ENCODE measurements at regions of chr9 and their contacts with region 1.

Region 1: GRCh38 chr9:36258208-36258988 is at the start of gene GNE:
- DNase-seq: peak; percentile 95 to 99 (median 98)
- ATAC-seq: peak; percentile 89
- H3K4me3 ChIP-seq: peak within 1 kb of the TSS; percentile 85 to 100
- H3K4me3 Mint-ChIP-seq: peak within 1 kb of the TSS; percentile 98
- H3K27ac ChIP-seq: peak within 1 kb of the TSS; percentile 90 to 91
- H3K27ac Mint-ChIP-seq: peak within 1 kb of the TSS; percentile 97
- H3K4me1 ChIP-seq: peaks cover 17% of the 10 kb centered on the region
- H3K4me1 Mint-ChIP-seq: peaks cover 16% of the 10 kb centered on the region
- H3K27me3 ChIP-seq: no peaks in the 10 kb centered on the region
- H3K27me3 Mint-ChIP-seq: no peaks in the 10 kb centered on the region
- CTCF ChIP-seq: no peak
- total RNA-seq, gene GNE: 17.3 to 17.4 TPM

Region 2: GRCh38 chr9:37027582-37028419 is 769.4 kb after region 1 on chr9:
- CTCF ChIA-PET with region 1: no interaction called
- POLR2A ChIA-PET with region 1: no interaction called
- intact Hi-C with region 1: loop called in 1 of 2 experiments (anchors 5 kb)
- DNase-seq: peak; percentile 63 to 89 (median 81)
- ATAC-seq: peak; percentile 95
- H3K4me3 ChIP-seq: peak overlapping the region; percentile 35 to 44
- H3K4me3 Mint-ChIP-seq: peak overlapping the region; percentile 53
- H3K27ac ChIP-seq: no peak overlapping the region
- H3K27ac Mint-ChIP-seq: no peak overlapping the region
- H3K4me1 ChIP-seq: peaks cover 54% of the 10 kb centered on the region
- H3K4me1 Mint-ChIP-seq: peaks cover 45% of the 10 kb centered on the region
- H3K27me3 ChIP-seq: peaks cover 64 to 71% of the 10 kb centered on the region in 2 experiments
- H3K27me3 Mint-ChIP-seq: peaks cover 80% of the 10 kb centered on the region
- CTCF ChIP-seq: no peak

Measured in CD8-positive, alpha-beta T cell (primary cell).